A549 (cell line): ENCODE measurements at regions of chr11 and their contacts with region 1.

Region 1: DNA sequence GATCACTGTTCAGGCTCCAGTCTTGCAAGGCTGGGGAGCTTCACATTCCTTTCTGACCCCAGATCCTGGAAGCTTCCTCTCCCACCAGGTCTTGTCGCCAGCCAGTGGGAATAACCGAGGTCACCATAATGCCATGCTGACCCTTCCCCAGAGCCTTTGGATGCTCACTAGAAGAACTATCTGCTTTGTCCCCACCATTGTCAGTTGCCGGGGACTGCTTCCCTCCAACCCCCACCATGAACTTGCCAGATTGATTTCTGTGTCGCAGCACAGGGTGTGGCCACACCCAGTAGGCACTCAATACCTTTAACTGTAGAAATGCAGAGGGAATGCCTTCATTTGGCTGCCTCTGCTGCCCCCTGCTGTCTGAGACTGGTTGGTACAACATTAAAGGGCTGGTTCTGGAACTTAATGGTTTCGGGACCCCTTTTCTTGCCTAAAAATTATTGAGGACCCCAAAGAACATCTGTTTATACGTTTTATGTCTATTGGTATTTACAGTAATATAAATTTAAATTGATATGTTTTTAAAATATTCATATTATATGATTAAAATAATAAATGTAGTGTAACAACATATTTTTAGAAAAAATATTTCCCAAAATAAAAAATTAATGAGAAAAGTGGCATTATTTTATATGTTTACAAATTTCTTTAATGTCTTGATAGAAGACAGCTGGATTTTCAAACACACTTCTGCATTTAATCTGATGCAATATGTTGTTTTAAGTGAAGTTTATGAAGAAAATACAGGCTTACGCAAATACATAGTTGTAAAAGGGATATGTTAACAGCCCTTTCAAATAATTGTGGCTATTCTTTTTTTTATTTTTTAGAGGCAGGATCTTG is 6.7 kb upstream of the GDPD5 start:
- DNase-seq: peak; percentile 71 to 82
- ATAC-seq: peak; percentile 58 to 74; a peak in 4 of 6 replicates
- H3K4me3 ChIP-seq: no peak overlapping the region
- H3K27ac ChIP-seq: peak overlapping the region; percentile 17 to 18; a peak in 2 of 6 replicates
- H3K4me1 ChIP-seq: peaks cover 30% of the 10 kb centered on the region
- CTCF ChIP-seq: peak; percentile 96
- EP300 ChIP-seq: no peak
- POLR2A ChIP-seq: no peak
- RAD21 ChIP-seq: peak; percentile 98 to 99

Region 2: GRCh38 chr11:75126564-75126963 is 405.9 kb before region 1 on chr11:
- CTCF ChIA-PET with region 1: no interaction called
- POLR2A ChIA-PET with region 1: no interaction called
- DNase-seq: no peak
- ATAC-seq: no peak
- H3K4me3 ChIP-seq: no peak overlapping the region
- H3K27ac ChIP-seq: no peak overlapping the region
- H3K4me1 ChIP-seq: no peaks in the 10 kb centered on the region
- CTCF ChIP-seq: no peak
- EP300 ChIP-seq: no peak
- POLR2A ChIP-seq: no peak
- RAD21 ChIP-seq: no peak

Region 3: GRCh38 chr11:75280227-75280701 is 252.2 kb before region 1 on chr11:
- CTCF ChIA-PET with region 1: interaction called, 30 read pairs
- POLR2A ChIA-PET with region 1: no interaction called
- DNase-seq: peak; percentile 79 to 93
- ATAC-seq: peak; percentile 85 to 97
- H3K4me3 ChIP-seq: no peak overlapping the region
- H3K27ac ChIP-seq: peak overlapping the region in 1 of 2 experiments; percentile 28; a peak in 1 of 6 replicates
- H3K4me1 ChIP-seq: peaks cover 10% of the 10 kb centered on the region
- CTCF ChIP-seq: peak; percentile 90
- EP300 ChIP-seq: no peak
- POLR2A ChIP-seq: no peak
- RAD21 ChIP-seq: peak; percentile 96 to 99

Region 4: GRCh38 chr11:75406338-75406777 is 126.1 kb before region 1 on chr11:
- CTCF ChIA-PET with region 1: interaction called, 31 read pairs
- POLR2A ChIA-PET with region 1: no interaction called
- DNase-seq: no peak
- ATAC-seq: no peak
- H3K4me3 ChIP-seq: no peak overlapping the region
- H3K27ac ChIP-seq: no peak overlapping the region
- H3K4me1 ChIP-seq: peaks cover 49% of the 10 kb centered on the region
- CTCF ChIP-seq: no peak
- EP300 ChIP-seq: no peak
- POLR2A ChIP-seq: no peak
- RAD21 ChIP-seq: no peak

Region 5: GRCh38 chr11:75437966-75438659 is 94.3 kb before region 1 on chr11:
- CTCF ChIA-PET with region 1: interaction called, 432 read pairs
- POLR2A ChIA-PET with region 1: no interaction called
- DNase-seq: no peak
- ATAC-seq: 0 out of 6 replicates have a peak, but pooled peaks of 1 of the 2 experiments have one; percentile 7
- H3K4me3 ChIP-seq: no peak overlapping the region
- H3K27ac ChIP-seq: no peak overlapping the region; a peak in 1 of 6 replicates
- H3K4me1 ChIP-seq: peaks cover 10% of the 10 kb centered on the region; the same call in 2 of the 3 replicates
- CTCF ChIP-seq: no peak
- EP300 ChIP-seq: no peak
- POLR2A ChIP-seq: no peak
- RAD21 ChIP-seq: no peak

Region 6: DNA sequence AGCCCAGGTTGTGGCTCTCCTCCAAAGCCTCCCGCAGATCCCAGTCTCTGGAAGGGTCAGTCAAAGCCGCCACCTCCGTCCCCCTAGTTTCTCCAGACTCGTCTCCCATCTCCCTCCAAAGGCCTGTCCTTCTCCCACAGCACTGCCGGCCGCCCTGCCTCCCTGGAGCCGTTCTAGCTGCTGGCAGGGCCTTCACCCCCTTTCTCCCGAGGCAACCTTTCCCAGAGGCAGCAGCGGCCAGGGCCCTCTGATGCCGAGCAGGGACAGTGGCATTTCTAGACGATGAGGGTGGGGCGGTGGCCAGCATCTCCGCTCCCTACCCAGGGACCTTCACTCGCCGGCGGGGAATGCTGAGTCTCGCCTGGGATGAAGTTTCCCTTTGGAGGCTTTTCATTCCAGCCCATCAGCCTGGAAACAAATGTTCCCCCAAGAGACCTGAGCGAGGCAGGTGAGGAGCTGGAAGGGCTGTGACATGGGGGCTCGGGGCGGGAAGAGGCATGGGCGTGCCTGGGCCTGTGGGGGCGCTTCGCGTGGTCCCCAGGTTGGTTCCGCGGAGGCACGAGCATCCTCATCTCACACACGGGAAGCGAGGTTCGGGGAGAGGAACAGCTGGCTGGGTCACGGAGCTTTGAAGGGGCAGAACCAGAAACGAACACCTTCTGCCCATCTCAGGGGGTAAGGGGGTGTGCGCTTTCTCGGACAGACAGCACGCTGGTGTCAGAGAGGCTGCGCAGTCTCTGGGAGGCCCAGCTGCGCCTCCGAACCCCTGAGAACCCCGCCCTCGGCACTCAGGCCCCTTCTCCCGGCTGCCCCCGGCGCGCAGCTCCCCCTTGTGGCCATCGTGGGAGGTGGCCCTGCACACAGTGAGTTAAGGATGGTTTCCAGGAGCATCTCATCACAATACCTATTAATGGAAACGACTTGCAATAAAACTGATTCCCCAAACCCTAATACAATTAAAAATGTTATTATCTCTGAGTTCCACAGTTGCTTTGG is 81.3 kb before region 1 on chr11:
- CTCF ChIA-PET with region 1: interaction called, 432 read pairs
- POLR2A ChIA-PET with region 1: no interaction called
- DNase-seq: peak in 1 of 2 experiments; percentile 28
- ATAC-seq: peak in 1 of 2 experiments; percentile 66; a peak in 3 of 6 replicates
- H3K4me3 ChIP-seq: no peak overlapping the region
- H3K27ac ChIP-seq: no peak overlapping the region
- H3K4me1 ChIP-seq: peaks cover 14% of the 10 kb centered on the region; the same call in 1 of the 3 replicates
- CTCF ChIP-seq: peak; percentile 47
- EP300 ChIP-seq: no peak
- POLR2A ChIP-seq: no peak
- RAD21 ChIP-seq: peak; percentile 32 to 41; a peak in 4 of 5 replicates

Region 7: GRCh38 chr11:75499449-75500190 is 32.8 kb before region 1 on chr11:
- CTCF ChIA-PET with region 1: interaction called, 12 read pairs
- POLR2A ChIA-PET with region 1: interaction called, 3 read pairs
- DNase-seq: peak; percentile 76 to 92
- ATAC-seq: peak; percentile 60 to 81
- H3K4me3 ChIP-seq: no peak overlapping the region
- H3K27ac ChIP-seq: peak overlapping the region; percentile 65 to 82
- H3K4me1 ChIP-seq: peaks cover 51% of the 10 kb centered on the region
- CTCF ChIP-seq: no peak
- EP300 ChIP-seq: no peak; a peak in 1 of 5 replicates
- POLR2A ChIP-seq: no peak
- RAD21 ChIP-seq: no peak

Region 8: DNA sequence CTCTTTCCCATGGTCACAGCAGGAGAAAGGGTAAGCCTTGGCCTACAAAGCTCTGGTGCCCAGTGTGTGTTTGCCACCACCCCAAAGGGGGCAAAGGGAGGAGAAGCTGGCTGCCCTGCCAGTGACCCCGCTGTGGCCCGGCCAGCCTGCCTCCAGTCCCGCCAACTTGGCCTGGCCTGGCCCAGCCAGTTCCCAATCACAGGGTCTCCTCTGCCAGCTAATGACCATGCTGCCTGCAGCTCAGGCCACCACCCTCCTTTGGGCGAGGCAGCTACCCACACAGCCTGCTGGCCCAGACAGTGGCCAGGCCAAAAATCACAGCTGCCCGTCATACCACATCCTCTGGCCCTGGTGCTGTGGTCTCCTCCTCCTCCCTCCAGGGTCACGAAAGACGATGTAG is 11.7 kb before region 1 on chr11:
- CTCF ChIA-PET with region 1: interaction called, 63 read pairs
- POLR2A ChIA-PET with region 1: no interaction called
- DNase-seq: no peak
- ATAC-seq: no peak
- H3K4me3 ChIP-seq: no peak overlapping the region
- H3K27ac ChIP-seq: no peak overlapping the region
- H3K4me1 ChIP-seq: peaks cover 11% of the 10 kb centered on the region
- CTCF ChIP-seq: no peak
- EP300 ChIP-seq: no peak
- POLR2A ChIP-seq: no peak
- RAD21 ChIP-seq: no peak

Region 9: DNA sequence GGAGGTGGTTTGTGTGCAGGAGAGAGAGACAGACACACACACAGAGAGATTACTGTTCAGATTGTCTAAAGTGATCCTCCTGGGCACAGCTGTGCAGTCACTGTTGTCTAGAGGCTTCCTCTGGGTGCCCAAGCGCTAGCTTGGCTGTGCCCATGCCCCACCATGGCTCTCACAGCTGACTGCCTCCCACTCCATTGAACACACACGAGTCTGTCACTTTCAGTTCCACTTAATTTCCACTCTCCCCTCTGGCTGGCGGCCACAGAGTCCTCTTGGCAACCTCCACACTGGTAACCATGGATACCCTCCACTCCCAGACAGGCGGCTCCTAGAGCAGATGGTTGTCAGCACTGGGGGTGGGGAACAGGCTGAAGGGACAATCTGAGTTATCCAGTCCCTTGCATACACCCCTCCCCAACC is 107.3 kb after region 1 on chr11:
- CTCF ChIA-PET with region 1: no interaction called
- POLR2A ChIA-PET with region 1: no interaction called
- DNase-seq: no peak
- ATAC-seq: peak; percentile 29 to 43; a peak in 2 of 6 replicates
- H3K4me3 ChIP-seq: no peak overlapping the region
- H3K27ac ChIP-seq: no peak overlapping the region
- H3K4me1 ChIP-seq: no peaks in the 10 kb centered on the region; the same call in 2 of the 3 replicates
- CTCF ChIP-seq: no peak
- EP300 ChIP-seq: no peak
- POLR2A ChIP-seq: no peak
- RAD21 ChIP-seq: no peak